RWPE1 (cell line): ENCODE measurements at regions of chr11 and their contacts with region 1.

Region 1: GRCh38 chr11:61733120-61733978 is 19.1 kb upstream of the MYRF start:
- DNase-seq: peak; percentile 90
- H3K27ac ChIP-seq: peak overlapping the region; percentile 38
- CTCF ChIP-seq: peak; percentile 98

Region 2: DNA sequence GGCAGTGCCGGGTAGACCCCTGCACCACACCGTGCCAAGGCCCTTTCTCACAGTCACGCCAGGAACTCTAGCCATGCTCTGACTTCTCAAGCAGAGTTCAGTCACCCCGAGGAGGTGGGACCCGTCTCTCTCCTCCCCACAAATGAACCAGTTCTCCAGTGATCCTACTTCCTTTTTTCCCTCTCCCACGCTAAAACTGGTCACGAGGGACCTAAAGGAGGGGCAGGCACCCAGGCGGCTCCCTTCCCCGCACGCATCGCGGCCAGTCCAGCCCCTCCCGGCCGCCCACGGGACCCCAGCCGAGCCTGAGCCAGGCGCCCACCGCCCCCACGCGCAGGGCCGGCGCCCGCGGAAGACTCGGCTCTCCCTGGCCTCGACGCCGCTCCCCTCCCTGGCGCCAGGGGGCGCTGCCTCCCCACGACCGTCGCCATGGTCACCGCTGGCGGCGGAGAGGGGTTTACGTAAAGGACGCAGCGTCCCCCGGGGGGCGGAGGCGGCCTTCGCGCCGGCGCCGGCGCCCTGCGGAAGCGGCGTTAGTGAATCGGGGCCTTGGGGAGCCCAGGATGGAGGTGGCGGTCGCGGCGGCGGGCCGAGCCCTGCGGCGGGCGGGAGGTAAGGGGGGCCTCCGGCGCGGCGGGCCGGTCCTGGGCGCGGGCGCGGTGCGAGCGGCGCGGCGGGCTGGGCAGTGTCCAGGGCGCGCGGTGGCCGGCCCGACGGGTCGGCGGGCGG is 53.3 kb before region 1 on chr11 and contains the start of gene DAGLA:
- CTCF ChIA-PET with region 1: interaction called, 26 read pairs
- POLR2A ChIA-PET with region 1: no interaction called
- DNase-seq: peak; percentile 82
- H3K27ac ChIP-seq: no peak within 1 kb of the TSS
- CTCF ChIP-seq: peak; percentile 93

Region 3: DNA sequence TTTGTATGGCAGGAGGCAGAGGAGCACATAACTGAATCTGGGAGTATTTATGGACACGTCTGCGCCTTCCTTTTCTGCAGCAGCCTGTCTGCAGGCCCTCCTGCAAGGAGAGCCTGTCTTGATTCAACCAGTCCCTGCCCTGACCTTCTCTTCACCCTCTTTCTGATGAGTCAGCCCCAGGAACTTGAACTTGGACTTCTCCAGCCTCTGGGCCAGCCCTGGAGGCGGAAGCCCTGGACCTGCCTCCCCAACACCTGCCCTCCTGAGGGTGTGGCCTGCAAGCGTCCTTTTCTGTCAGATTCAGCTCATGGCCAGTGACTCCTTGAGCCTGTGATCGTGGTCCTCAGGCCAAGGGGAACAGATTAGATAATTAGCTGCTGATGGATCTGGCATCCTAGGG is 33.1 kb before region 1 on chr11:
- CTCF ChIA-PET with region 1: interaction called, 13 read pairs
- POLR2A ChIA-PET with region 1: no interaction called
- DNase-seq: peak; percentile 87
- H3K27ac ChIP-seq: peak overlapping the region; percentile 96
- CTCF ChIP-seq: no peak